WTC11 (cell line): ENCODE measurements at regions of chr12 and their contacts with region 1.

Region 1: GRCh38 chr12:6451348-6452244 is at the start of gene TAPBPL:
- DNase-seq: peak; percentile 54
- ATAC-seq: peak; percentile 50
- H3K4me3 Mint-ChIP-seq: peak within 1 kb of the TSS; percentile 51
- H3K27ac Mint-ChIP-seq: peak within 1 kb of the TSS; percentile 92
- H3K4me1 Mint-ChIP-seq: peaks cover 39% of the 10 kb centered on the region
- H3K27me3 Mint-ChIP-seq: no peaks in the 10 kb centered on the region
- CTCF ChIP-seq: no peak
- total RNA-seq, gene TAPBPL: 0.98 to 1.3 TPM (median 1.1 TPM) in 3 replicates

Region 2: GRCh38 chr12:6423267-6424007 is 28.2 kb before region 1 on chr12:
- CTCF ChIA-PET with region 1: interaction called, 14 read pairs
- POLR2A ChIA-PET with region 1: no interaction called
- DNase-seq: peak; percentile 77
- ATAC-seq: peak; percentile 96
- H3K4me3 Mint-ChIP-seq: no peak overlapping the region
- H3K27ac Mint-ChIP-seq: no peak overlapping the region
- H3K4me1 Mint-ChIP-seq: peaks cover 8% of the 10 kb centered on the region
- H3K27me3 Mint-ChIP-seq: no peaks in the 10 kb centered on the region; the same call in none of the 2 replicates
- CTCF ChIP-seq: peak; percentile 83; the same call in 1 of the 2 replicates

Region 3: GRCh38 chr12:6434205-6435140 is 17.1 kb before region 1 on chr12:
- CTCF ChIA-PET with region 1: no interaction called
- POLR2A ChIA-PET with region 1: interaction called, 10 read pairs
- DNase-seq: no peak
- ATAC-seq: peak; percentile 78
- H3K4me3 Mint-ChIP-seq: no peak overlapping the region
- H3K27ac Mint-ChIP-seq: peak overlapping the region; percentile 79
- H3K4me1 Mint-ChIP-seq: peaks cover 32% of the 10 kb centered on the region
- H3K27me3 Mint-ChIP-seq: no peaks in the 10 kb centered on the region
- CTCF ChIP-seq: no peak

Region 4: DNA sequence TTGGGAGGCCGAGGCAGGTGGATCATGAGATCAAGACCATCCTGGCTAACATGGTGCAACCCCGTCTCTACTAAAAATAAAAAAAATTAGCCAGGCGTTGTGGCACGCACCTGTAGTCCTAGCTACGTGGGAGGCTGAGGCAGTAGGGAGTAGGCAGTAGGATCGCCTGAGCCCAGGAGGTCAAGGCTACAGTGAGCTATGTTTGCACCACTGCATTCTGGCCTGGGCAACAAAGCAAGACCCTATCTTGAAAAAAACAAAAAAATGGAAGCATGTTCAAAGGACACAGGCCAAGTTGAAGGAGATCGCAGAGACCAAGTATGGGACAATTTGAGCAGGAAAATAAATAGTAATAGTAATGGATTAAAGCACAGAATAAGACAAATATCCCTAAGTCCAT is 56.5 kb after region 1 on chr12:
- CTCF ChIA-PET with region 1: no interaction called
- POLR2A ChIA-PET with region 1: no interaction called
- DNase-seq: no peak
- ATAC-seq: no peak
- H3K4me3 Mint-ChIP-seq: no peak overlapping the region
- H3K27ac Mint-ChIP-seq: peak overlapping the region; percentile 92
- H3K4me1 Mint-ChIP-seq: peaks cover 11% of the 10 kb centered on the region
- H3K27me3 Mint-ChIP-seq: no peaks in the 10 kb centered on the region
- CTCF ChIP-seq: no peak